Endothelial cell of umbilical vein (primary cell): ENCODE measurements at regions of chr2 and their contacts with region 1.

Region 1: GRCh38 chr2:204325468-204325867 is 219.8 kb upstream of the PARD3B start:
- DNase-seq: peak; percentile 89
- H3K4me3 ChIP-seq: no peak overlapping the region
- H3K27ac ChIP-seq: no peak overlapping the region
- H3K4me1 ChIP-seq: peaks cover 19% of the 10 kb centered on the region
- H3K27me3 ChIP-seq: no peaks in the 10 kb centered on the region
- CTCF ChIP-seq: peak; percentile 61 to 68
- POLR2A ChIP-seq: no peak

Region 2: GRCh38 chr2:204114295-204115145 is 210.9 kb before region 1 on chr2:
- CTCF ChIA-PET with region 1: interaction called, 5 read pairs
- POLR2A ChIA-PET with region 1: no interaction called
- dilution Hi-C with region 1: no loop called
- intact Hi-C with region 1: loop called (anchors 1 kb)
- DNase-seq: peak; percentile 99
- H3K4me3 ChIP-seq: peak overlapping the region in 1 of 3 experiments; percentile 11
- H3K27ac ChIP-seq: peak overlapping the region; percentile 86
- H3K4me1 ChIP-seq: peaks cover 77% of the 10 kb centered on the region
- H3K27me3 ChIP-seq: no peaks in the 10 kb centered on the region
- CTCF ChIP-seq: no peak
- POLR2A ChIP-seq: peak; percentile 73

Region 3: GRCh38 chr2:204251158-204251997 is 74.1 kb before region 1 on chr2:
- CTCF ChIA-PET with region 1: no interaction called
- POLR2A ChIA-PET with region 1: no interaction called
- dilution Hi-C with region 1: no loop called
- intact Hi-C with region 1: no loop called
- DNase-seq: no peak
- H3K4me3 ChIP-seq: no peak overlapping the region
- H3K27ac ChIP-seq: no peak overlapping the region
- H3K4me1 ChIP-seq: no peaks in the 10 kb centered on the region
- H3K27me3 ChIP-seq: peaks cover 0 to 1% of the 10 kb centered on the region in 2 experiments
- CTCF ChIP-seq: no peak
- POLR2A ChIP-seq: no peak

Region 4: DNA sequence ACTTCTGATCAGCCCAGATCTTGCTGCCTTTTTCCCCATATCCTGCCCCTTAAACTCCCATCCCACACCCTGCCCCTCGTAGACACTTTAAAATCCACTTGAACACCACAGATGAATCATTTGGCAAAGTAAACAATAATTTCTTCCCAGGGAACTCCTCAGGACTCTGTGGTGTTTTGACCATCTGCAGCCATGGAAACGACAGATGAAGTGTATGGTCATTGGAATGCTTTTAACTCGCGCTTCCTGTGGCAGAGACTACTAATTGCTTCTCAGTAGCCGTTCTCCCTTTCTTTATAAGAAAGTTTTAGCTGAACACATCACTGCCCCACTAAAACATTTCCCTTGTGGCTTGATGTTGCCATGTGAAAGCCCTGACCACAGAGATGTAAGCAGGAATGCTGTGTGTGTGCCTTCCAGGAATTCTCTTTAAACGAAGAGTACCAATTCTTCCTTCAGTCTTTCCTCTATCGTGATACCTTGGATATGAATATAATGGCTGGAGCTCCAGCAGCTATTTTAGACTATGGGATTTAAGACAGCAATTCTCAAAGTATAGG is 127.1 kb after region 1 on chr2:
- CTCF ChIA-PET with region 1: no interaction called
- POLR2A ChIA-PET with region 1: no interaction called
- dilution Hi-C with region 1: no loop called
- intact Hi-C with region 1: loop called (anchors 1 kb)
- DNase-seq: peak; percentile 99
- H3K4me3 ChIP-seq: no peak overlapping the region
- H3K27ac ChIP-seq: peak overlapping the region; percentile 92
- H3K4me1 ChIP-seq: peaks cover 24% of the 10 kb centered on the region
- H3K27me3 ChIP-seq: no peaks in the 10 kb centered on the region
- CTCF ChIP-seq: no peak
- POLR2A ChIP-seq: no peak

Region 5: GRCh38 chr2:204691911-204692510 is 366.5 kb after region 1 on chr2:
- CTCF ChIA-PET with region 1: interaction called, 40 read pairs
- POLR2A ChIA-PET with region 1: no interaction called
- dilution Hi-C with region 1: no loop called
- intact Hi-C with region 1: loop called (anchors 1 kb)
- DNase-seq: peak; percentile 90
- H3K4me3 ChIP-seq: no peak overlapping the region
- H3K27ac ChIP-seq: peak overlapping the region; percentile 36
- H3K4me1 ChIP-seq: peaks cover 18% of the 10 kb centered on the region
- H3K27me3 ChIP-seq: no peaks in the 10 kb centered on the region
- CTCF ChIP-seq: peak; percentile 68 to 72
- POLR2A ChIP-seq: no peak

Region 6: GRCh38 chr2:204871231-204871953 is 545.9 kb after region 1 on chr2:
- CTCF ChIA-PET with region 1: interaction called, 5 read pairs
- POLR2A ChIA-PET with region 1: no interaction called
- dilution Hi-C with region 1: no loop called
- intact Hi-C with region 1: loop called (anchors 1 kb)
- DNase-seq: peak; percentile 87
- H3K4me3 ChIP-seq: no peak overlapping the region
- H3K27ac ChIP-seq: peak overlapping the region; percentile 42
- H3K4me1 ChIP-seq: peaks cover 14% of the 10 kb centered on the region
- H3K27me3 ChIP-seq: no peaks in the 10 kb centered on the region
- CTCF ChIP-seq: peak in 1 of 2 donors; percentile 20
- POLR2A ChIP-seq: no peak

Region 7: GRCh38 chr2:205435970-205436369 is 1110.5 kb after region 1 on chr2:
- CTCF ChIA-PET with region 1: no interaction called
- POLR2A ChIA-PET with region 1: no interaction called
- dilution Hi-C with region 1: no loop called
- intact Hi-C with region 1: loop called (anchors 1 kb)
- DNase-seq: peak; percentile 84
- H3K4me3 ChIP-seq: no peak overlapping the region
- H3K27ac ChIP-seq: peak overlapping the region; percentile 65
- H3K4me1 ChIP-seq: peaks cover 9% of the 10 kb centered on the region
- H3K27me3 ChIP-seq: no peaks in the 10 kb centered on the region
- CTCF ChIP-seq: peak in 1 of 2 donors; percentile 1
- POLR2A ChIP-seq: no peak